ENCODE measurements at regions of chr1 and their contacts with region 1.

Region 1: DNA sequence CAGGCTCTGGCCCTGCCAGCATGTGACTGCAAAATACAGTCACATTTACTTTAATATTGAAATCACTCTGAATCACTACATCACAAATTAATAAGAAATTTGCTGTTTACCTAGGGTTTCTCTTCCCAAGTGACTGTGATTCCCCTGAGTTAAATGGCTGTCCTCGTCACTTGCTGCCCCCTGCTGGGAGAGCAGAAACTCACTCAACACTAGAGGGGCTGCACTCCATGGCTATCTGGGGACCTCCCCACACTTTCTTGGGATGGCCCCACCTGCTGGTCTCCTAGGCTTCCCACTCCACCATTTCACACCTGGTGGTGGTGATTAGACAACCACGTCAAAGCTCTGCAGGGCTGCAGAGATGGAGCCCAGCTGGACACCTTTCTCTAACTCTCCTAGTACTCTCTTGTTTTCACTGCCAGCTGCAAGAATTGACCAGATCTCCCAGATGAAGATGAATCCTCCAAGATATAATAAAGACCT is 63.4 kb downstream of the CD2 start:
- DNase-seq: peak; percentile 78
- H3K4me3 Mint-ChIP-seq: no peak overlapping the region
- H3K27ac Mint-ChIP-seq: peak overlapping the region; percentile 53
- H3K4me1 Mint-ChIP-seq: peaks cover 63% of the 10 kb centered on the region
- H3K27me3 Mint-ChIP-seq: no peaks in the 10 kb centered on the region

Region 2: GRCh38 chr1:116724765-116725375 is 92.8 kb before region 1 on chr1:
- CTCF ChIA-PET with region 1: interaction called, 15 read pairs
- POLR2A ChIA-PET with region 1: interaction called, 3 read pairs
- DNase-seq: peak; percentile 81
- H3K4me3 Mint-ChIP-seq: no peak overlapping the region
- H3K27ac Mint-ChIP-seq: no peak overlapping the region
- H3K4me1 Mint-ChIP-seq: peaks cover 23% of the 10 kb centered on the region
- H3K27me3 Mint-ChIP-seq: no peaks in the 10 kb centered on the region

Region 3: GRCh38 chr1:116754198-116754977 is 63.2 kb before region 1 on chr1 and contains the start of gene CD2:
- CTCF ChIA-PET with region 1: interaction called, 13 read pairs
- POLR2A ChIA-PET with region 1: interaction called, 250 read pairs
- DNase-seq: peak; percentile 73
- H3K4me3 Mint-ChIP-seq: peak within 1 kb of the TSS; percentile 99
- H3K27ac Mint-ChIP-seq: peak within 1 kb of the TSS; percentile 95
- H3K4me1 Mint-ChIP-seq: peaks cover 39% of the 10 kb centered on the region
- H3K27me3 Mint-ChIP-seq: no peaks in the 10 kb centered on the region
- total RNA-seq, gene CD2: 329 to 340 TPM

Region 4: DNA sequence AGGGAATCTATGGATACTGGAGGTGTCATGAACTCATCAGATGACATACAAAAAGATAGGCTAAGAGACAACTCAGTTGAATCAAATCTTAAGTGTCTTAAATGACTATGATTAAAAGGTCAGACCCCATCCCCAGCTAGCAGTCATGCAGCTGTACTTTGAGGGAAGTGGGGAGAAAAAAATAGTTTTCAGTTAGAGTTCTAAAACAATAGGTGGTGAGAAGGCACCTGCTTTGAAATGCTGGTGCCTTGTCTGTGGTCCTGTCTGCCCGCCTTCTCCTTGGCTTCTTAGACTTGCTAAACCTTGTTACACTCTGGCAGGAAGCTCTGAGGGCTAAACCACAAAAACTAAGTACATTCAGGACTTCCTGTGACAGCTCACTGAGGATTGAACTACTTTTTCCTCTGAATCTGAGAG is 48.1 kb before region 1 on chr1:
- CTCF ChIA-PET with region 1: interaction called, 34 read pairs
- POLR2A ChIA-PET with region 1: interaction called, 250 read pairs
- DNase-seq: peak; percentile 82
- H3K4me3 Mint-ChIP-seq: peak overlapping the region; percentile 49
- H3K27ac Mint-ChIP-seq: peak overlapping the region; percentile 99
- H3K4me1 Mint-ChIP-seq: peaks cover 89% of the 10 kb centered on the region
- H3K27me3 Mint-ChIP-seq: no peaks in the 10 kb centered on the region

Region 5: GRCh38 chr1:116794804-116795481 is 22.7 kb before region 1 on chr1:
- CTCF ChIA-PET with region 1: interaction called, 4 read pairs
- POLR2A ChIA-PET with region 1: interaction called, 32 read pairs
- DNase-seq: no peak
- H3K4me3 Mint-ChIP-seq: no peak overlapping the region
- H3K27ac Mint-ChIP-seq: no peak overlapping the region
- H3K4me1 Mint-ChIP-seq: peaks cover 74% of the 10 kb centered on the region
- H3K27me3 Mint-ChIP-seq: no peaks in the 10 kb centered on the region

Region 6: GRCh38 chr1:116806245-116806644 is 11.4 kb before region 1 on chr1:
- CTCF ChIA-PET with region 1: interaction called, 41 read pairs
- POLR2A ChIA-PET with region 1: interaction called, 59 read pairs
- DNase-seq: peak; percentile 65
- H3K4me3 Mint-ChIP-seq: peak overlapping the region; percentile 79
- H3K27ac Mint-ChIP-seq: peak overlapping the region; percentile 95
- H3K4me1 Mint-ChIP-seq: peaks cover 86% of the 10 kb centered on the region
- H3K27me3 Mint-ChIP-seq: no peaks in the 10 kb centered on the region

Region 7: GRCh38 chr1:117001254-117001927 is 183.8 kb after region 1 on chr1 and contains the start of gene CD101:
- CTCF ChIA-PET with region 1: no interaction called
- POLR2A ChIA-PET with region 1: no interaction called
- DNase-seq: peak; percentile 21
- H3K4me3 Mint-ChIP-seq: peak within 1 kb of the TSS; percentile 5
- H3K27ac Mint-ChIP-seq: peak within 1 kb of the TSS; percentile 84
- H3K4me1 Mint-ChIP-seq: peaks cover 30% of the 10 kb centered on the region
- H3K27me3 Mint-ChIP-seq: peaks cover 14% of the 10 kb centered on the region
- total RNA-seq, gene CD101: 2.9 to 3.6 TPM

Measured in activated CD4-positive, alpha-beta memory T cell treated with anti-CD3 and anti-CD28 coated beads, Interleukin-2, amount 10 ng/mL, durations not matched to agents 7 days and 5 days (primary cell).